ENCODE measurements at regions of chr5 and their contacts with region 1.

Region 1: DNA sequence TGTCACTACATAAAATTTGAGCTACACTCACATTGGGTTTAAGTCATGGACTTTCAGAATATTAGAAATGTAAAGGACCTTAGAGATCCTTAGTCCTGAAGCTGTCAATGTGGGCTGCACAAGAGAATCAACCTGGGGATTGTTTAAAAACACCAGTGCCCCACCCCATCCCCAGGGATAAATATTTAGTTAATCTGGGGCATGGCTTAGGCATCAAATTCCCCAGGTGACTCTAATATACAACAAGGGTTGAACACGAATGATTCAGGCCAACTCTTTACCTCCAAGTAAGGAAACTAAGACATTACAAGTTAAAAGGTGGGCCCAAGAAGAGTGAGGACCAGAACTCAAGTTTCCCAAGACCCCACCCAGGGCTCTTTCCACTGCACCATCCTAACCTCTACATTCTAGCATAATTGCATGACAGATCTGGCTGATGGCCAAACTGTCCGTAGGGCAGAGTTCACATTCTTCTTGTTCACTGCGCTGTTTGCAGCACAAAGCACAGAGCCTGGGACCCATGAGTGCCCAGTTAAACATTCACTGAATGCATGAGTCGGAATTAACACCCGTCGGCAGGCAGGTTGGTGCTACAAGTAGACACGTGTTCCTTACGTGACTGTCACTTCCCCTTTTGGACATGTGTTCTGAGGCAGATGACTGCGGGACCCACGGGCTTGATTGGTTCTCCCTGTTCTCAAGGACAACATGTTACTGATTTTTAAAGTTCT is 25.2 kb downstream of the CYFIP2 start:
- DNase-seq: peak; percentile 79 to 92
- H3K4me3 ChIP-seq: no peak overlapping the region
- H3K4me3 Mint-ChIP-seq: peak overlapping the region; percentile 49
- H3K27ac Mint-ChIP-seq: peak overlapping the region; percentile 77
- H3K4me1 ChIP-seq: peaks cover 37% of the 10 kb centered on the region
- H3K4me1 Mint-ChIP-seq: peaks cover 40% of the 10 kb centered on the region
- H3K27me3 ChIP-seq: no peaks in the 10 kb centered on the region
- H3K27me3 Mint-ChIP-seq: no peaks in the 10 kb centered on the region
- CTCF ChIP-seq: no peak

Region 2: DNA sequence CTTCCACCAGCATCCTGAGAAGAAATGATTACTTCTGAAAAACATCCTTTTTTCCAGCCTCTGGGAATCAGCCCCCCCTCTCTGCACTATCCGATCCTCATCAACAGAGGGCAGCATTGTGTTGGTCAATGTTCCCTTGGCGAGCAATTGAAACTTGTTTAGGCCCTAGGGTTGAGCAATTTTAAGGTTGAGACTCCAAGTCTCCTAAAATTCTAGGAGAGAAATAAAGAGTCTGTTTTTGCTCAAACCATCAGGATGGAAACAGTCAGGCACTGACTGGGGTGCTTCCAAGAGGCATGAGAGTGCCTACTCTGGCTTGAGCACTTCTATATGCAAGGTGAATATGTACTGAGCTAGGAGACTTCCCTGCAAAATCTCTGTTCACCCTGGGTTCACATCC is 37.6 kb before region 1 on chr5:
- CTCF ChIA-PET with region 1: no interaction called
- POLR2A ChIA-PET with region 1: no interaction called
- intact Hi-C with region 1: loop called (anchors 2 kb)
- DNase-seq: peak in 1 of 2 experiments; percentile 70
- H3K4me3 ChIP-seq: no peak overlapping the region
- H3K4me3 Mint-ChIP-seq: no peak overlapping the region
- H3K27ac Mint-ChIP-seq: no peak overlapping the region
- H3K4me1 ChIP-seq: no peaks in the 10 kb centered on the region
- H3K4me1 Mint-ChIP-seq: no peaks in the 10 kb centered on the region
- H3K27me3 ChIP-seq: no peaks in the 10 kb centered on the region
- H3K27me3 Mint-ChIP-seq: peaks cover 8% of the 10 kb centered on the region
- CTCF ChIP-seq: peak; percentile 89 to 92

Region 3: DNA sequence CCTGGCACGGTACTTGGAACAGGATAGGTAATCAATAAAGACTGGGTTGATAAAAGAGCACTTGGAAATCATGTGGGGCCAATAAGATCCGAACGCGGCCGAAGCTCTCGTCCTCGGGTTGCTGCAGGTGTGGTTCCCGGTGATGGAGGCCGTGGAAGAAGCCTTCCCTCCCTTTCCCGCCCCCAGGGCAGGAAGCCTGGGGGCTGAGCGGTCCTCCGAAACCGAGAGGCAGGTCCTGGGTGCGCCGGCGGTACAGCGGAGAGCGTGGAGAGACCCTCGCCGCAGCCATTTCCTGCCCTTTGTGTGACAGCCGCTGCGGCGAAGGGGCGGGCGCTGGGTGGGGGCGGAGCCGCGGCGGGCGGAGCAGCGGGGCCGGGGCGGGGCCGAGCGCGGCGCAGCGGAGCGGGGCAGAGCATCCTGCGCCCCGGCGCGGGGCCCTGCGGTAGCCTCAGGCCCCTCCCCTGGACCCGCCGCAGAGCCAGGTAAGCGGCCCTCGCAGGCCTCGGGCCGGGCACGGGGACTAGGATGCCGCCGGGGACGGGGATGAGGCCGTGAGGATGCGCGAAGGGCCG is 25.3 kb before region 1 on chr5 and contains the start of gene CYFIP2:
- CTCF ChIA-PET with region 1: interaction called, 3 read pairs
- POLR2A ChIA-PET with region 1: no interaction called
- intact Hi-C with region 1: loop called (anchors 1 kb)
- DNase-seq: peak in 1 of 2 experiments; percentile 66
- H3K4me3 ChIP-seq: peak within 1 kb of the TSS; percentile 64
- H3K4me3 Mint-ChIP-seq: peak within 1 kb of the TSS; percentile 83
- H3K27ac Mint-ChIP-seq: no peak within 1 kb of the TSS
- H3K4me1 ChIP-seq: no peaks in the 10 kb centered on the region
- H3K4me1 Mint-ChIP-seq: no peaks in the 10 kb centered on the region
- H3K27me3 ChIP-seq: no peaks in the 10 kb centered on the region; the same call in 1 of the 2 replicates
- H3K27me3 Mint-ChIP-seq: peaks cover 17% of the 10 kb centered on the region
- CTCF ChIP-seq: no peak
- total RNA-seq, gene CYFIP2: 10.2 and 14.3 TPM in 2 replicates

Region 4: GRCh38 chr5:157443041-157443549 is 151.9 kb after region 1 on chr5:
- CTCF ChIA-PET with region 1: no interaction called
- POLR2A ChIA-PET with region 1: no interaction called
- intact Hi-C with region 1: no loop called
- DNase-seq: no peak
- H3K4me3 ChIP-seq: no peak overlapping the region
- H3K4me3 Mint-ChIP-seq: no peak overlapping the region
- H3K27ac Mint-ChIP-seq: no peak overlapping the region
- H3K4me1 ChIP-seq: peaks cover 14% of the 10 kb centered on the region
- H3K4me1 Mint-ChIP-seq: peaks cover 10% of the 10 kb centered on the region
- H3K27me3 ChIP-seq: no peaks in the 10 kb centered on the region
- H3K27me3 Mint-ChIP-seq: no peaks in the 10 kb centered on the region
- CTCF ChIP-seq: no peak

Measured in Caco-2 (cell line).